ENCODE measurements at regions of chr18 and their contacts with region 1.

Region 1: DNA sequence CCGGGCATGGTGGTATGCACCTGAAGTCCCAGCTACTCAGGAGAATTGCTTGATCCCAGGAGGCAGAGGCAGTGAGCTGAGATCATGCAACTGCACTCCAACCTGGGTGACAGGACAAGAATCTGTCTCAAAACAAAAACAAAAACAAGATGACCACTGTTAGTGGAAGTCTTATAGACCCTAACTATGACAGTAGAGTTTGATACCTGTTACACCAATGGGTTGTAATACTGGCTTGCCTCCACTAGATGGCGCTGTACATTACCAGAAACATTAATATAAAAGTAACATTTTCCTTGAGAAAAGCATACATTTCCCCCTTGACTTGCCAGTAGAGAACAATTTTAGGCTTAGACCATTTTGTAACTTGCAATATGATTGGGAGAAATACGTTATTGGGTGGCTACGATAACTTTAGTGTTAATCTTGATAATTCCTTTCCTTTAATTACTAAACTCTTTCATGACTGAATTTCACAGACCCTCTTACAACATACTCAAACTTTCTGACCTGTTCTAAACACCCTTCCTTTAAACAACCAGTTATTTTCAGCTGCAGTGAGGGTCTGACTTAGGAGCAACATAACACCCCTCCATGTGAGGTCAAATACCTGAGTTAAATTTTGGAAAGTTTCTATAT is 19.5 kb downstream of the SLC25A52 start:
- DNase-seq: no peak
- H3K4me3 ChIP-seq: no peak overlapping the region
- H3K27ac ChIP-seq: no peak overlapping the region
- H3K4me1 ChIP-seq: no peaks in the 10 kb centered on the region
- H3K27me3 ChIP-seq: no peaks in the 10 kb centered on the region
- CTCF ChIP-seq: peak; percentile 91

Region 2: GRCh38 chr18:31506024-31506742 is 235.0 kb before region 1 on chr18:
- intact Hi-C with region 1: no loop called
- DNase-seq: no peak
- H3K4me3 ChIP-seq: no peak overlapping the region
- H3K27ac ChIP-seq: no peak overlapping the region
- H3K4me1 ChIP-seq: peaks cover 8% of the 10 kb centered on the region
- H3K27me3 ChIP-seq: no peaks in the 10 kb centered on the region
- CTCF ChIP-seq: peak; percentile 63

Region 3: DNA sequence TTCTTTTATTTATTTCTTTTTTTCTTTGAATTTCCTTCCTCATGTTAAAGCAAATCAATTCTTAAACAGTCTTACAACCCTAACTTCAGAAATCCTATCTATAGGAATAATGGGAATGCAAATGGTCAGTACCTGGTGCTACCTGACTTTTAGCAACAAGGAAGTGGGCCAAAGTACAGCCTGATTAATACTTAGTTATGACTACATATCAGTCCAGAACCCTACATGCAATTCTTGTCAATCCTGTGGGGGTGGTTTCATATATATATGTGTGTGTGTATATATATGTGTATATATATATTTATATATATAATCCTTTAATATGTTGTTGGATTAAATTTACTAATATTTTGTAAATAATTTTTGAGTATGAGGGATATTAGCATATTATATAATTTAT is 216.5 kb after region 1 on chr18:
- intact Hi-C with region 1: loop called (anchors 5 kb)
- DNase-seq: no peak
- H3K4me3 ChIP-seq: no peak overlapping the region
- H3K27ac ChIP-seq: no peak overlapping the region
- H3K4me1 ChIP-seq: no peaks in the 10 kb centered on the region
- H3K27me3 ChIP-seq: no peaks in the 10 kb centered on the region
- CTCF ChIP-seq: no peak

Region 4: GRCh38 chr18:31977270-31977872 is 236.2 kb after region 1 on chr18:
- intact Hi-C with region 1: loop called (anchors 5 kb)
- DNase-seq: no peak
- H3K4me3 ChIP-seq: no peak overlapping the region
- H3K27ac ChIP-seq: no peak overlapping the region
- H3K4me1 ChIP-seq: peaks cover 5% of the 10 kb centered on the region
- H3K27me3 ChIP-seq: no peaks in the 10 kb centered on the region
- CTCF ChIP-seq: peak; percentile 84